ENCODE measurements at regions of chr1 and their contacts with region 1.

Region 1: DNA sequence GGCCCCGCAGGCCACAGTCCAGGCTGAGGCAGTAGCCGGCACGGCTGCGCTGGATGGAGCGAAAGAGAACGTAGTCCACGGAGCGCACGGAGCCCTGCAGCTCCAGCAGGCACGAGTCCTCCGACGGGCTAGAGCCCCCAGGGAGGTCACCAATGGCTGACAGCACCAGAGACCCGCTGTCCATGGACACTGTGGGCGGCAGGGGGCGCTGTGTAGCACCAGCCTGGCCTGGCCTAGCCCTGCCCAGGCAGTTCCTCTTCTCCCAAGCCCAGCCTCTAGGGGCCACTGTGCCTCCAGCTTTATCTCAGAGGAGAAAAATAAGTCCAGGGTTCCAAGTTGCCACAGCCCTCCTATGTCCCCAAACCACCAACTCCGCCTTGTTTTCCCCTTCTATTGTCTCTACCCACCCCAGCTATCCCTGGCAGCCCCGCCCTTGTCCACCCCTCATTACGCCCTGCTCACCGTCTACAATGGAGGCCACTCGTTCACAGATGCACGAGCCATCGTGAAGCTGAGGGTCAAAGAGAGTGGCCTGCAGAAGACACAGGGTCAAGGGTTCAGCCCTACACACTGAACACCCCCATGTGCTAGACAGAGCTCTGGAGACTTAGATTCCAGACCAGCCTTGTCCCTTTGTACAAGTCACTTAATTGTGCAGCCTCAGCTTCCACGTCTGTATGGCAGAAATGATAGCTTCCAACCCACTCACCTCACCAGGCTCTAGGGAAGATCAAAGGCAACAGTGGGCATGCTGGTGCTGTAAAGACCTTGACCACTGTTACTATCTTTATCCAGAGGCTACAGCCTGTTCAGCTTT is 4.4 kb downstream of the ENTREP3 start:
- DNase-seq: no peak
- H3K4me3 ChIP-seq: no peak overlapping the region
- H3K27me3 ChIP-seq: no peaks in the 10 kb centered on the region
- CTCF ChIP-seq: peak; percentile 100

Region 2: GRCh38 chr1:155227261-155228095 is 23.4 kb before region 1 on chr1:
- CTCF ChIA-PET with region 1: interaction called, 27 read pairs
- POLR2A ChIA-PET with region 1: no interaction called
- DNase-seq: peak; percentile 95
- H3K4me3 ChIP-seq: peak overlapping the region; percentile 51
- H3K27me3 ChIP-seq: no peaks in the 10 kb centered on the region
- CTCF ChIP-seq: peak; percentile 21; the same call in 1 of the 2 replicates

Region 3: GRCh38 chr1:155267373-155267772 is 16.5 kb after region 1 on chr1:
- CTCF ChIA-PET with region 1: interaction called, 54 read pairs
- POLR2A ChIA-PET with region 1: no interaction called
- DNase-seq: no peak
- H3K4me3 ChIP-seq: no peak overlapping the region
- H3K27me3 ChIP-seq: no peaks in the 10 kb centered on the region
- CTCF ChIP-seq: no peak

Region 4: GRCh38 chr1:155300553-155301329 is 49.9 kb after region 1 on chr1:
- CTCF ChIA-PET with region 1: interaction called, 19 read pairs
- POLR2A ChIA-PET with region 1: no interaction called
- DNase-seq: no peak
- H3K4me3 ChIP-seq: no peak overlapping the region
- H3K27me3 ChIP-seq: peaks cover 13% of the 10 kb centered on the region
- CTCF ChIP-seq: no peak

Region 5: DNA sequence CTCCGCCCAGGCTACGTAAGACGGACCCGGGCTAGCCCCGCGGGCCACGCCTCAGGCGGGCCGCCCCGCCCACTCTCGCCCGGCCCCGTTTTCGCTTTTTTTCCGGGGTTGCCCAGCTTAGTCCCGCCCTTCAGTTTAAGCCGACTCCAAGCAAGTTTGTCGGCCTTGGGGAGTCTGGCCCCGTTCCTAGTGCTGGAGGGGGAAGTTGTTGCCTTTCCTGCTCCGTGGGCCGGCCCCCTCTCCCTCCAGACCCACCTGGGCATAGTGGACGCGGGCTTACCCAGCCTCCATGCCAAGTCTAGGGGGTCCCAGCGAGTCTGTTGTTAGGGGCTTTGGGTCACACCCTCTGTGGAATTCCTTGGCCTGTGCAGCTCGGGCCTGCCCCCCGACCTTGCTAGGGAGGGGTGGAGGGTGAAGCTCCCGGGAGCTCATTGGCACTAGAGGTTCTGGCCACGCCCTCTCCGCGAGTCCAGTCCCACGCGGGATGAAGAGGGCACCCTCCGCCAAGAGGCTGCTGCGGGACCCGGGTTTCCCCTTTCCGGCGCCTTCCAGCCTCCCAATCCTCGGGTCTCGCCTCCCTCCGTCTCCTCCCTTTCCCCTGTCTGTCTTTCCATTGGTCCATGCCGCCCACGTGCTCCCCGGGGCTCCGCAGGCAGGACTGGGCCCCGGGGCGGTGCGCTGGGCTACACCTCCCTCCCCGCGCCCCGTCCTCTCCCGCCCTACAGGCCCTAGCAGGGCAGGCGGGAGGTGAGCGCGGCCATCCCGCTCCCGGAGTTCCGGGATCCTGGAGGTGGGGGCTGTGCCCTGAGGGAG is 73.2 kb after region 1 on chr1:
- CTCF ChIA-PET with region 1: interaction called, 54 read pairs
- POLR2A ChIA-PET with region 1: no interaction called
- DNase-seq: peak; percentile 81
- H3K4me3 ChIP-seq: peak overlapping the region; percentile 66
- H3K27me3 ChIP-seq: no peaks in the 10 kb centered on the region
- CTCF ChIP-seq: no peak

Region 6: GRCh38 chr1:155598842-155599331 is 348.0 kb after region 1 on chr1:
- CTCF ChIA-PET with region 1: interaction called, 39 read pairs
- POLR2A ChIA-PET with region 1: no interaction called
- DNase-seq: no peak
- H3K4me3 ChIP-seq: peak overlapping the region; percentile 1; the same call in 1 of the 2 replicates
- H3K27me3 ChIP-seq: no peaks in the 10 kb centered on the region
- CTCF ChIP-seq: peak; percentile 32

Region 7: DNA sequence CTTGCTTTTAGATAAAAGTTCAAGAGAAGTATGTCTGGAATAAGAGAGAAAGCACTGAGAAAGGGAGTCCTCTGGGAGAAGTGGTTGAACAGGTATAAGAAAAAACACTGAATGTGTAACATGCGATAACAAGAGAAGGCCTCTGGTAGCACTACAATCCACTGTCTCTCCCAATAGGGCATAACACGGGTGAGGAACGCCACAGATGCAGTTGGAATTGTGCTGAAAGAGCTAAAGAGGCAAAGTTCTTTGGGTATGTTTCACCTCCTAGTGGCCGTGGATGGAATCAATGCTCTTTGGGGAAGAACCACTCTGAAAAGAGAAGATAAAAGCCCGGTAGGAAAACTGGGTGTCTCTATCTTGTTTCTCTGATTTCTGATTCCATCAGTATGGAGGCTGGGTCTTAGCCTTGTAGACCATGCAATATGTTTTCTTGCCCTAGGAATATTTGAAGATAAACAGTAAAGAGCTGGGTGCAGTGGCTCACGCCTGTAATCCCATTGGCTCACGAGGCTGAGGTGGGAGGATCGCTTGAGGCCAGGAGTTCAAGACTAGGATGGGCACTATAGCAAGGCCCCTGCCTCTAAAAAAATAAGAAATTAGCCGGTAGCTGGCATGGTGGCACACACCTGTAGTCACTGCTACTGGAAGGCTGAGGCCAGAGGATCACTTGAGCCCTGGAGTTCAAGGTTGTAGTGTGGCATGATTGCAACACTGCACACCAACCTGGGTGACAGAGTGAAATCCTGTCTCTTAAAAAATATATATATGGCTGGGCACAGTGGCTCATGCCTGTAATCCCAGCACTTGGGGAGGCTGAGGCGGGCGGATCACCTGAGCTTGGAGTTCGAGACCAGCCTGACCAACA is 478.4 kb after region 1 on chr1:
- CTCF ChIA-PET with region 1: interaction called, 13 read pairs
- POLR2A ChIA-PET with region 1: no interaction called
- DNase-seq: no peak
- H3K4me3 ChIP-seq: no peak overlapping the region
- H3K27me3 ChIP-seq: no peaks in the 10 kb centered on the region
- CTCF ChIP-seq: peak; percentile 75

Region 8: GRCh38 chr1:155934097-155934935 is 683.5 kb after region 1 on chr1 and contains the start of gene KHDC4:
- CTCF ChIA-PET with region 1: no interaction called
- POLR2A ChIA-PET with region 1: no interaction called
- DNase-seq: peak; percentile 98
- H3K4me3 ChIP-seq: peak within 1 kb of the TSS; percentile 85
- H3K27me3 ChIP-seq: no peaks in the 10 kb centered on the region
- CTCF ChIP-seq: peak; percentile 29; the same call in 1 of the 2 replicates
- polyA plus RNA-seq, gene KHDC4: 39.0 and 39.8 TPM in 2 replicates

Measured in BJ (cell line).